Aorta (tissue), 5 donors: ENCODE measurements at regions of chr17 and their contacts with region 1.

Region 1: DNA sequence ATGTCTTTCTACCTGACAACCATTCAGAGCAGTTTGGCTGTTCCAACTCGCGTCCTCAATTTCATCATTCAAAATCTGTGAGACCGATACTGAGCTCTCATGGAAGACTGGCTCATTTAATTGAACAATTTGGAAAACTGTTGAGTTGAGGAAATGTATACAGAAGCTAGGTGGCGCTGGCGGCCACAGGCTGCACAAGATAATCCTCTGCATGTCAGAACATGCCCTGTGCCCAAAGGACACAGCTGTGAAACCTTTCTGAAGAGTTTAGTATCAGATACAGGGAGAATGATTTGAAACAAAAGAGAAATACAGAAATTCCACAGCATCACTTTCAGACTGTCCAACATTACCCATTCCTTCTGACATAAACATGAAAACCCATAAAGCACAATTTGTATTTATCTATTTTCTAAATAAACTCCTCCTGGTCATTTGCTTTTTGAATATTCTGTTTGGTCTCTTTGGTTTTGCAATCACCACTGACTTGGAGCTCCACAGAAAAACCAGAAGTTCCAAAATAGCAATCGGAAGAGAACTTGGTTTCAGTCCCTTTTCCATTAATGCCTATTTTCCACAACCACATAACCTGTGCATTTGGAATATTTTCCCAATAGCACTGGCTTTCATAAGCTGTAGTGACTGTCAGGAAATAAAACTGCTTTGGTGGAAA is 192.8 kb downstream of the MAP2K6 start:
- DNase-seq: peak; percentile 80 to 86
- ATAC-seq: peak; percentile 84
- H3K4me3 ChIP-seq: no peak overlapping the region
- H3K27ac ChIP-seq: peak overlapping the region in 1 of 2 donors; percentile 51
- H3K4me1 ChIP-seq: peaks cover 0 to 4% of the 10 kb centered on the region in 2 donors
- H3K27me3 ChIP-seq: no peaks in the 10 kb centered on the region

Region 2: DNA sequence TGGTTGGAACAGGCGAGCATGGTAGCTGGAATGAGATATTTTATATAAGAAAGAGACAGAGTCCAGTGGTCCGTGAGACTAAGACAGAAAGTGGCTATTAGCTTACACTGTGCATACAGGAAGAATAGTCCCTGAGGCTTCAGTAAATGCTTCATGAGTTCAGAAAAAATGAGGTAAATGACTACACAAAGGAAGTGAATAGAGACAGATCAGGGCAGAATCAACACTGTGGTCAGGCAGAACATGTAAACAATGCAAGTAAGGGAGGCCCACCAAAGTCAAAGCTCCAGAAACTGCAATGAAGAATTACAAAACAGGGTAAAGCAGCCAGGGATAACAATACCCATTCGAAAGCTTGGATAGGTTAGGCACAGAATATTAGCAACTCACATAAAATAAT is 383.5 kb before region 1 on chr17:
- intact Hi-C with region 1: no loop called
- DNase-seq: no peak
- ATAC-seq: no peak
- H3K4me3 ChIP-seq: no peak overlapping the region
- H3K27ac ChIP-seq: no peak overlapping the region
- H3K4me1 ChIP-seq: no peaks in the 10 kb centered on the region
- H3K27me3 ChIP-seq: no peaks in the 10 kb centered on the region

Region 3: GRCh38 chr17:70137451-70138230 is 530.3 kb after region 1 on chr17:
- intact Hi-C with region 1: loop called in 1 of 2 experiments (anchors 2 kb)
- DNase-seq: peak in 1 of 2 donors; percentile 58
- ATAC-seq: peak; percentile 87
- H3K4me3 ChIP-seq: peak overlapping the region; percentile 60 to 70
- H3K27ac ChIP-seq: peak overlapping the region in 1 of 2 donors; percentile 71
- H3K4me1 ChIP-seq: peaks cover 0 to 4% of the 10 kb centered on the region in 2 donors
- H3K27me3 ChIP-seq: no peaks in the 10 kb centered on the region